CD8-positive, alpha-beta memory T cell (primary cell): ENCODE measurements at regions of chr12 and their contacts with region 1.

Region 1: DNA sequence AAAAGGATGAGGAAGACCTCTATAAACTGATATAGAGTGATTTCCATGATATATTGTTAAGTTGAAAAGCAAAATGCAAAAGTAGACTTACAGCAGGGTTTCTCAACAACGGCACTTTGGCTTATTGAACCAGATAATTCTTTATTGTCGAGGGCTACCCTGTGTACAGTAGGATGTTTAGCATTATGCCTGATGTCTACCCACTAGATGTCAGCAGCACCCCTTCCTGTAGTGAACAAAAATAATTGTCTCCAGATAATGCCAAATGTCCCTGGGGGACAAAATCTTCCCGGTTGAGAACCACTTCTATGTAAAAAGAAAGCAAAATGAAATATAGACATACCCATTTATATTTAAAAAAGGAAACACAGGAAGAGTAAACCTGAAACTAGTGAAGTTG is 32.4 kb downstream of the ABCD2 start:
- DNase-seq: peak in 3 of 5 donors; percentile 18 to 50 (median 27)
- H3K4me3 ChIP-seq: no peak overlapping the region
- H3K4me3 Mint-ChIP-seq: no peak overlapping the region
- H3K27ac ChIP-seq: no peak overlapping the region
- H3K27ac Mint-ChIP-seq: peak overlapping the region in 3 of 8 donors; percentile 5 to 61 (median 49)
- H3K4me1 ChIP-seq: no peaks in the 10 kb centered on the region
- H3K4me1 Mint-ChIP-seq: peaks cover 12 to 31% (median 27%) of the 10 kb centered on the region in 3 donors
- H3K27me3 ChIP-seq: no peaks in the 10 kb centered on the region
- H3K27me3 Mint-ChIP-seq: no peaks in the 10 kb centered on the region

Region 2: GRCh38 chr12:39692258-39692853 is 105.1 kb after region 1 on chr12:
- CTCF ChIA-PET with region 1: interaction called, 22 read pairs
- POLR2A ChIA-PET with region 1: interaction called, 3 read pairs
- DNase-seq: peak in 2 of 5 donors; percentile 13 to 28
- H3K4me3 ChIP-seq: no peak overlapping the region
- H3K4me3 Mint-ChIP-seq: no peak overlapping the region
- H3K27ac ChIP-seq: no peak overlapping the region
- H3K27ac Mint-ChIP-seq: no peak overlapping the region
- H3K4me1 ChIP-seq: no peaks in the 10 kb centered on the region
- H3K4me1 Mint-ChIP-seq: peaks cover 0 to 6% (median 5%) of the 10 kb centered on the region in 3 donors
- H3K27me3 ChIP-seq: no peaks in the 10 kb centered on the region
- H3K27me3 Mint-ChIP-seq: no peaks in the 10 kb centered on the region